GM12878 (cell line): ENCODE measurements at regions of chr18 and their contacts with region 1.

Region 1: GRCh38 chr18:12883684-12884405 is at the start of gene PTPN2:
- DNase-seq: peak; percentile 77
- ATAC-seq: peak; percentile 74
- H3K4me3 ChIP-seq: peak within 1 kb of the TSS; percentile 85
- H3K27ac ChIP-seq: peak within 1 kb of the TSS; percentile 97
- H3K4me1 ChIP-seq: peaks cover 36% of the 10 kb centered on the region
- H3K27me3 ChIP-seq: no peaks in the 10 kb centered on the region
- CTCF ChIP-seq: no peak
- EP300 ChIP-seq: peak in 1 of 2 experiments; percentile 56; a peak in 2 of 4 replicates
- POLR2A ChIP-seq: peak; percentile 98
- RAD21 ChIP-seq: no peak
- polyA plus RNA-seq, gene PTPN2: 54.9 to 57.9 TPM

Region 2: GRCh38 chr18:12744103-12744502 is 139.7 kb before region 1 on chr18:
- CTCF ChIA-PET with region 1: interaction called, 4 read pairs
- POLR2A ChIA-PET with region 1: interaction called, 3 read pairs
- RAD21 ChIA-PET with region 1: interaction called, 4 read pairs
- SMC1A ChIA-PET with region 1: interaction called, 46 read pairs
- in situ Hi-C with region 1: no loop called
- intact Hi-C with region 1: no loop called
- DNase-seq: no peak
- ATAC-seq: peak; percentile 77
- H3K4me3 ChIP-seq: no peak overlapping the region
- H3K27ac ChIP-seq: no peak overlapping the region
- H3K4me1 ChIP-seq: no peaks in the 10 kb centered on the region
- H3K27me3 ChIP-seq: no peaks in the 10 kb centered on the region
- CTCF ChIP-seq: peak; percentile 25 to 62 (median 53); a peak in 5 of 6 replicates
- EP300 ChIP-seq: no peak
- POLR2A ChIP-seq: no peak
- RAD21 ChIP-seq: peak; percentile 87

Region 3: DNA sequence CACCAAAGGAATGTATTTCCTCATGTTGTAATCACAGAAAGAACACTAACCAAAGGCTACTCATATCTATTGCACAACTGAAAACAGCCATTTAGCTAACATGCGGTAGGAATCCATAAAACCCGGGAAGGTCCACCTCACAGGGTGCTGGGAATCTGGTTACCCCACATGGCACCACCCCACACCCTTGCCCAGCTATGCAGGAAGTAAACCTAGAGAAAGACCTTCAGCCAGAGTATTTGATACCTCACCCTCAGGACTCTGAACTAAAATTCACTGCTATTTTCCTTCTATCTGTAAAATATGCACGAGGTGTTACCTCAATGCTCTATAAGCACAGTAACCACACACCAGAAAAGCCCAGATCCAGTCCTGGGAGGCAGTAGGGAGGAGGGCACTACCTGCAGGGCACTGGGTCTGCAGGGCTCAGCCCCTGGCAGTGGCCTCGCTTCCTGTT is 45.6 kb before region 1 on chr18:
- CTCF ChIA-PET with region 1: interaction called, 7 read pairs
- POLR2A ChIA-PET with region 1: interaction called, 62 read pairs
- RAD21 ChIA-PET with region 1: interaction called, 81 read pairs
- SMC1A ChIA-PET with region 1: interaction called, 52 read pairs
- in situ Hi-C with region 1: no loop called
- intact Hi-C with region 1: loop called (anchors 1 kb)
- DNase-seq: peak; percentile 39
- ATAC-seq: peak; percentile 42
- H3K4me3 ChIP-seq: peak overlapping the region; percentile 62
- H3K27ac ChIP-seq: peak overlapping the region; percentile 95
- H3K4me1 ChIP-seq: peaks cover 31% of the 10 kb centered on the region
- H3K27me3 ChIP-seq: no peaks in the 10 kb centered on the region
- CTCF ChIP-seq: no peak
- EP300 ChIP-seq: no peak
- POLR2A ChIP-seq: no peak
- RAD21 ChIP-seq: no peak

Region 4: GRCh38 chr18:12857215-12857905 is 26.5 kb before region 1 on chr18:
- CTCF ChIA-PET with region 1: interaction called, 4 read pairs
- POLR2A ChIA-PET with region 1: interaction called, 14 read pairs
- RAD21 ChIA-PET with region 1: interaction called, 6 read pairs
- SMC1A ChIA-PET with region 1: interaction called, 95 read pairs
- in situ Hi-C with region 1: no loop called
- intact Hi-C with region 1: no loop called
- DNase-seq: no peak
- ATAC-seq: peak; percentile 76
- H3K4me3 ChIP-seq: no peak overlapping the region
- H3K27ac ChIP-seq: peak overlapping the region; percentile 53; the same call in 1 of the 2 replicates
- H3K4me1 ChIP-seq: peaks cover 23% of the 10 kb centered on the region
- H3K27me3 ChIP-seq: no peaks in the 10 kb centered on the region
- CTCF ChIP-seq: peak in 1 of 3 experiments; percentile 18; a peak in 1 of 6 replicates
- EP300 ChIP-seq: no peak
- POLR2A ChIP-seq: no peak
- RAD21 ChIP-seq: no peak

Region 5: DNA sequence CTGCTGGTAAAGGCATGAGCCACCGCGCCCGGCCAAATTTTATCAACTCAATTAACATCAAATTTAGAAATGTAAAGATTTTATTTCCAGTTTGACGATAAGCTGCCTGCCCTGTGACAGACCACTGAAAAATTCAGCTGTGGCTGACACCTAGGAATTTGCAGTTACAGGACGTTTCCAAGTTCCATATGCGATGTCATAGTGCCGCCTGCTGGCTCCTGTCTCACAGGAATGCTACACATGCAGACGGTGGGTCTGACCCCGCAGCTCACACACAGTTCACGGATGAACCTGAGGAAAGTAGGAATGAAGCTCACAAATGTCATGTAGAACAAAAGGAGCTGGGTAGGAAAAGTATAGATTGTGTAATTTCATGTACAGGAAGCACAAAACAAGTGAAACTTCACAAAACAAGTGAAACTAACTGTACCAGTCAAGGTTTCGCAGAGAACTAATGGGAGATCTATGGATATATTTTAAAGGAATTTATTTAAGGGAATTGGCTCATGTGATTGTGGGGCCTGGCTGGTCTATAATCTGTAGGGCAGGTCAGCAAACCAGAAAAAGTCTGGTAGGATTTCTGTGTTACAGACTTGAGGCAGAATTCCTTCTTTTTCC is 50.7 kb after region 1 on chr18:
- CTCF ChIA-PET with region 1: interaction called, 14 read pairs
- POLR2A ChIA-PET with region 1: no interaction called
- RAD21 ChIA-PET with region 1: interaction called, 4 read pairs
- SMC1A ChIA-PET with region 1: interaction called, 7 read pairs
- in situ Hi-C with region 1: no loop called
- intact Hi-C with region 1: loop called (anchors 2 kb)
- DNase-seq: peak; percentile 34
- ATAC-seq: peak; percentile 96
- H3K4me3 ChIP-seq: no peak overlapping the region
- H3K27ac ChIP-seq: no peak overlapping the region
- H3K4me1 ChIP-seq: no peaks in the 10 kb centered on the region
- H3K27me3 ChIP-seq: no peaks in the 10 kb centered on the region; a peak in 2 of 4 replicates
- CTCF ChIP-seq: peak; percentile 95 to 99 (median 98); a peak in 5 of 6 replicates
- EP300 ChIP-seq: no peak
- POLR2A ChIP-seq: no peak
- RAD21 ChIP-seq: peak; percentile 100

Region 6: GRCh38 chr18:12990967-12991838 is 107.4 kb after region 1 on chr18 and contains the start of gene CEP192:
- CTCF ChIA-PET with region 1: interaction called, 4 read pairs
- POLR2A ChIA-PET with region 1: interaction called, 3 read pairs
- RAD21 ChIA-PET with region 1: no interaction called
- SMC1A ChIA-PET with region 1: interaction called, 3 read pairs
- in situ Hi-C with region 1: no loop called
- intact Hi-C with region 1: loop called (anchors 5 kb)
- DNase-seq: peak; percentile 96
- ATAC-seq: peak; percentile 91
- H3K4me3 ChIP-seq: peak within 1 kb of the TSS; percentile 76
- H3K27ac ChIP-seq: peak within 1 kb of the TSS; percentile 94
- H3K4me1 ChIP-seq: peaks cover 10% of the 10 kb centered on the region
- H3K27me3 ChIP-seq: no peaks in the 10 kb centered on the region
- CTCF ChIP-seq: no peak
- EP300 ChIP-seq: peak in 1 of 2 experiments; percentile 17; a peak in 1 of 4 replicates
- POLR2A ChIP-seq: peak; percentile 98
- RAD21 ChIP-seq: no peak
- polyA plus RNA-seq, gene CEP192: 15.4 to 24.5 TPM

Region 7: DNA sequence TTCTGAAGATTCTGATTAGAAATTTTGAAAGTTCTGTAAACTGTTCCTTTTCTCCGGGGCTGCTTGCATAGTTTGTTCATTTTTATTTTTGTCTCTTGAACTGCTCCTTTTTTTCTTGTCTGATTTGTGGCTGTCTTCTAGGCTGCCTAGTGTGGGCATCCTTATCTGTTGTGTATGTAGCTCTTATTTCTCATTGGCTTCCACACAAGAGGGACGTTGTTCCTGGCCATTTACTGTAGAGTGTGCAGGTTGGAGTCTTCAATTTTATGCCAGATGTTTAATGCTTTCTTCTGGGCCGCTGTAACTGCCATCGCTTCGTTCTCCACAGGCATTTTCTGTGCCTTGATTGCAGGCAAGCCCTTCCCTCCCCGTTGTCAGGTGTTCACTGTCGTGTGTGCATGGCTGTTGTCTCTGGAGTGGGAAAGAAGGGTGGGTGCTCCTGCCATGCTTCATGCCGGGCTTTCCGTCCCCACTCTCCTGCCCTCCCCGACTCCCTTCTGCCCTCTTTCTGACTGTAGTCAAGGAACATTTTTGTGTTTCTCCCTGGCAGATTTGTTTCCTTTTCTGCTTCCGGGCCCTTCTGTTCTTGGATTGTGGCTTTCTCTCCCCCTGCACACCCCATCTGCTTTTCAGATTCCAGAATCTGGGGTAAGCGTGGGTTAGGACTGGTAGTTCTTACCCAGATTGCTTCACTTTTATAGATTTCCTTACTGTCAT is 122.8 kb after region 1 on chr18:
- CTCF ChIA-PET with region 1: no interaction called
- POLR2A ChIA-PET with region 1: no interaction called
- RAD21 ChIA-PET with region 1: no interaction called
- SMC1A ChIA-PET with region 1: no interaction called
- in situ Hi-C with region 1: no loop called
- intact Hi-C with region 1: no loop called
- DNase-seq: no peak
- ATAC-seq: no peak
- H3K4me3 ChIP-seq: no peak overlapping the region
- H3K27ac ChIP-seq: no peak overlapping the region
- H3K4me1 ChIP-seq: peaks cover 6% of the 10 kb centered on the region
- H3K27me3 ChIP-seq: no peaks in the 10 kb centered on the region
- CTCF ChIP-seq: no peak
- EP300 ChIP-seq: no peak
- POLR2A ChIP-seq: no peak
- RAD21 ChIP-seq: no peak